ENCODE measurements at regions of chr5 and their contacts with region 1.

Region 1: GRCh38 chr5:72355706-72356299 is 35.6 kb downstream of the PTCD2 start:
- DNase-seq: no peak
- H3K4me3 ChIP-seq: no peak overlapping the region
- CTCF ChIP-seq: peak; percentile 53

Region 2: DNA sequence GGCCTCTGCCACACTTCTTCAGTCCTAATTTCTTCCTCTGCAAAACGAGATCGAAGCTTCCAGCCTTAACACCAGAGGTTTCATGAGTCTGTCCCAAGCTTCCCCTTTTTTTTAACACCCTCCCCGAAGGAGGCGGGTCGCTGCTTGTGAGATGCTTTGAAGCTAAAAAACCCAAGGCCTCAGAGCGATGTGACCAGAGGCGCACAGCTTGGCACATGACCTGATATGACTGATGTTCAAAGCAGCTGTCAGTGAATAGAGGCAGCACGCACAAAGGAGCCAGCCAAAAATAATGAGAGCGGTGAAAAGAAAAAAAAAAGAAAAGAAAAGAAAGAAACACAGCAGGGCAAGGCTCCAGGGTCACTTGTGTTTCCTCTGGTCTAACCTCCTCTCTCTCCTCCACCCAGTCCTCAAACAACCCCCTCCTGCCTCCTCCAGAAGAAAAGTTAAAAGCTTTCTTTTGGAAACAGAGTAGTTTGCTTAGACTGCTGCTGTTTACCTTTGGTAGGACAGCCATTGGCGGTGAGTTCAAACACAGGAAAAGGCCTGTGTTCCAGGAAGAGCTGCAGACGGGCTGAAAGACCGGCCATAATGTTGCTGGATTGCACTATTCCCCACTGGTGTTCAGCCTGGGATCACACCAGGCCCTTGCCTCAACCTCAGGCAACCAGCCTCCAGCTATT is 162.3 kb after region 1 on chr5:
- in situ Hi-C with region 1: loop called (anchors 5 kb)
- DNase-seq: no peak
- H3K4me3 ChIP-seq: no peak overlapping the region
- CTCF ChIP-seq: no peak